B cell (primary cell): ENCODE measurements at regions of chr6 and their contacts with region 1.

Region 1: GRCh38 chr6:166989427-166990032 is 9.7 kb upstream of the CEP43 start:
- DNase-seq: peak; percentile 74
- ATAC-seq: peak; percentile 86
- H3K4me3 ChIP-seq: no peak overlapping the region
- H3K4me3 Mint-ChIP-seq: no peak overlapping the region
- H3K27ac ChIP-seq: no peak overlapping the region
- H3K27ac Mint-ChIP-seq: peak overlapping the region; percentile 0
- H3K4me1 ChIP-seq: no peaks in the 10 kb centered on the region
- H3K4me1 Mint-ChIP-seq: peaks cover 7% of the 10 kb centered on the region
- H3K27me3 ChIP-seq: no peaks in the 10 kb centered on the region
- H3K27me3 Mint-ChIP-seq: no peaks in the 10 kb centered on the region
- CTCF ChIP-seq: peak; percentile 78

Region 2: DNA sequence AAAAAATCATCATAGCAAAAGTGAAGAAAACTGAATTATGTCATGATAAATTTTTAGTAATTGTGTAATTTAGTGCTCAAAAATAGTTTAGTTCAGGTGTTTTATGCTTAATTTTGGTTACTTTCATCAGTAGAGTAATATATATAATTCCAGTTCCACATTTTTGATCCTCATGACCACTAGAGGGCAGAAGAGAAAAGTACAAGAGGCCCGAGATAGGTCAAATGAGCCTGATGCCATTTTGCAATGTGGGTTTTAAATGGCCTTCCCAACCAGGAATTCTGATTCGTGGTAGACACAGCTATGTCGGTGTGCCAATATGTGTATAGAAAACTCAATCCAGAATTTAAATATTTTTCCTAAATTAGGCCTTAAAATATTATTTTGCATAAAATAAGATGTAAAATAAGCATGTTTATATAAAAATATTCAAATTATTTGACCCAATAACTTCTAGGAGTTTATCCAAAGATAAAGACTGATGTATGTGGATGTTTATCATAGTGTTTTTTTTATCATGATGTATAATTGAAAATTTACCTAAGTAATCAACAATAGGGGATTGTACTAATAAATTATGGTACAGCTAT is 202.7 kb before region 1 on chr6:
- CTCF ChIA-PET with region 1: interaction called, 130 read pairs
- POLR2A ChIA-PET with region 1: no interaction called
- intact Hi-C with region 1: loop called (anchors 1 kb)
- DNase-seq: peak; percentile 80
- ATAC-seq: peak; percentile 54
- H3K4me3 ChIP-seq: no peak overlapping the region
- H3K4me3 Mint-ChIP-seq: no peak overlapping the region
- H3K27ac ChIP-seq: no peak overlapping the region
- H3K27ac Mint-ChIP-seq: no peak overlapping the region
- H3K4me1 ChIP-seq: no peaks in the 10 kb centered on the region
- H3K4me1 Mint-ChIP-seq: no peaks in the 10 kb centered on the region
- H3K27me3 ChIP-seq: no peaks in the 10 kb centered on the region
- H3K27me3 Mint-ChIP-seq: no peaks in the 10 kb centered on the region
- CTCF ChIP-seq: peak; percentile 88

Region 3: GRCh38 chr6:166950443-166950821 is 39.1 kb before region 1 on chr6:
- CTCF ChIA-PET with region 1: interaction called, 117 read pairs
- POLR2A ChIA-PET with region 1: interaction called, 9 read pairs
- intact Hi-C with region 1: loop called (anchors 1 kb)
- DNase-seq: peak; percentile 76
- ATAC-seq: peak; percentile 22
- H3K4me3 ChIP-seq: peak overlapping the region; percentile 1 to 60 (median 24)
- H3K4me3 Mint-ChIP-seq: peak overlapping the region; percentile 94
- H3K27ac ChIP-seq: peak overlapping the region; percentile 82 to 94
- H3K27ac Mint-ChIP-seq: peak overlapping the region; percentile 98
- H3K4me1 ChIP-seq: peaks cover 62 to 69% of the 10 kb centered on the region in 2 donors
- H3K4me1 Mint-ChIP-seq: peaks cover 60% of the 10 kb centered on the region
- H3K27me3 ChIP-seq: no peaks in the 10 kb centered on the region
- H3K27me3 Mint-ChIP-seq: no peaks in the 10 kb centered on the region
- CTCF ChIP-seq: no peak

Region 4: DNA sequence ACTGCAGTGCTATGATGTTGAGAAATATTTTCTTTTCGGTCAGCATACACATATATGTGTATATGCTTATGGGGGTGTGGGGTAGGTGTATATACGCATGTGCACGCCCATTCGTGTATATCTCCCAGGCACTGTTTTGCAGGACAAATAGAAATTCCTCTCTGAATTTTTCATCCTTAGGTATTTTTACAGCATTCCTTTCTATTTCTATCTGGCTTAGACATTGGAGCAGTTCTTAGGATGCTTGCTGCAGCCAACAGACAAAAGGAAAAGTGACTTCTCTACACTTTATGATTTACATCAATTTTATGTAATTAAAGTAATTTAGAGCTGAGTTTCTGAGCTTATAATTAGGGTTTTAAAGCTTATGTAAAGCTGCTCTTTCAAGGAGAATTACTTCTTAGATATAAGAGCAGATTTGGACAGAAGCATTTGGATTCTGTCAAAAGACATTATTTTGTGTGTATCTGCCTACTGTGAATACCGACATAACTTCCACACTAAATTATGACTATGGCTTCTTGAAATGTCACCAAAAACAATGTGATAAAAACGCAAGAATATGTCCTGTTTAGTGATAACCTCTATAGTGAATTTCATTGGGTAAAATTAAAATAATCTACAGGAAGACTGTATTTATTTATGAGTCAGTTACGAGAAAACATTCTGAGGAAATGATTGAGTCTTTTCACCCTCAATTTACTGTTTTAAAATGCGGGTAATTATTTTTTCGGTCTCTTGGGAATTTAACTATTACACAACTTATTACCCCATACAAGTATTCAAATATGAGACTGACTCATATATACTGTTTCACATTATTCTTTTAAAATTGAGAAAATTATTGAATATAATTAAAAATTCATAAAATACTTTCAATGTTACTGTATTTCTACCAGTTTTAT is 11.7 kb before region 1 on chr6:
- CTCF ChIA-PET with region 1: interaction called, 35 read pairs
- POLR2A ChIA-PET with region 1: no interaction called
- intact Hi-C with region 1: no loop called
- DNase-seq: no peak
- ATAC-seq: no peak
- H3K4me3 ChIP-seq: no peak overlapping the region
- H3K4me3 Mint-ChIP-seq: no peak overlapping the region
- H3K27ac ChIP-seq: no peak overlapping the region
- H3K27ac Mint-ChIP-seq: peak overlapping the region; percentile 46
- H3K4me1 ChIP-seq: no peaks in the 10 kb centered on the region
- H3K4me1 Mint-ChIP-seq: no peaks in the 10 kb centered on the region
- H3K27me3 ChIP-seq: no peaks in the 10 kb centered on the region
- H3K27me3 Mint-ChIP-seq: no peaks in the 10 kb centered on the region
- CTCF ChIP-seq: no peak

Region 5: DNA sequence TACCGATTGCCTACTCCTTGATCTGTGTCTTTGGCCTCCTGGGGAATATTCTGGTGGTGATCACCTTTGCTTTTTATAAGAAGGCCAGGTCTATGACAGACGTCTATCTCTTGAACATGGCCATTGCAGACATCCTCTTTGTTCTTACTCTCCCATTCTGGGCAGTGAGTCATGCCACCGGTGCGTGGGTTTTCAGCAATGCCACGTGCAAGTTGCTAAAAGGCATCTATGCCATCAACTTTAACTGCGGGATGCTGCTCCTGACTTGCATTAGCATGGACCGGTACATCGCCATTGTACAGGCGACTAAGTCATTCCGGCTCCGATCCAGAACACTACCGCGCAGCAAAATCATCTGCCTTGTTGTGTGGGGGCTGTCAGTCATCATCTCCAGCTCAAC is 146.8 kb after region 1 on chr6:
- CTCF ChIA-PET with region 1: interaction called, 119 read pairs
- POLR2A ChIA-PET with region 1: no interaction called
- intact Hi-C with region 1: no loop called
- DNase-seq: no peak
- ATAC-seq: no peak
- H3K4me3 ChIP-seq: no peak overlapping the region
- H3K4me3 Mint-ChIP-seq: no peak overlapping the region
- H3K27ac ChIP-seq: peak overlapping the region in 1 of 2 donors; percentile 68
- H3K27ac Mint-ChIP-seq: peak overlapping the region; percentile 96
- H3K4me1 ChIP-seq: peaks cover 36 to 53% of the 10 kb centered on the region in 2 donors
- H3K4me1 Mint-ChIP-seq: peaks cover 86% of the 10 kb centered on the region
- H3K27me3 ChIP-seq: no peaks in the 10 kb centered on the region
- H3K27me3 Mint-ChIP-seq: no peaks in the 10 kb centered on the region
- CTCF ChIP-seq: no peak

Region 6: GRCh38 chr6:167221400-167222201 is 232.1 kb after region 1 on chr6:
- CTCF ChIA-PET with region 1: no interaction called
- POLR2A ChIA-PET with region 1: no interaction called
- intact Hi-C with region 1: no loop called
- DNase-seq: no peak
- ATAC-seq: no peak
- H3K4me3 ChIP-seq: no peak overlapping the region
- H3K4me3 Mint-ChIP-seq: no peak overlapping the region
- H3K27ac ChIP-seq: no peak overlapping the region
- H3K27ac Mint-ChIP-seq: no peak overlapping the region
- H3K4me1 ChIP-seq: no peaks in the 10 kb centered on the region
- H3K4me1 Mint-ChIP-seq: no peaks in the 10 kb centered on the region
- H3K27me3 ChIP-seq: peaks cover 0 to 3% (median under 1%) of the 10 kb centered on the region in 4 experiments
- H3K27me3 Mint-ChIP-seq: peaks cover 9% of the 10 kb centered on the region
- CTCF ChIP-seq: no peak